PC-3 (cell line): ENCODE measurements at regions of chr16 and their contacts with region 1.

Region 1: DNA sequence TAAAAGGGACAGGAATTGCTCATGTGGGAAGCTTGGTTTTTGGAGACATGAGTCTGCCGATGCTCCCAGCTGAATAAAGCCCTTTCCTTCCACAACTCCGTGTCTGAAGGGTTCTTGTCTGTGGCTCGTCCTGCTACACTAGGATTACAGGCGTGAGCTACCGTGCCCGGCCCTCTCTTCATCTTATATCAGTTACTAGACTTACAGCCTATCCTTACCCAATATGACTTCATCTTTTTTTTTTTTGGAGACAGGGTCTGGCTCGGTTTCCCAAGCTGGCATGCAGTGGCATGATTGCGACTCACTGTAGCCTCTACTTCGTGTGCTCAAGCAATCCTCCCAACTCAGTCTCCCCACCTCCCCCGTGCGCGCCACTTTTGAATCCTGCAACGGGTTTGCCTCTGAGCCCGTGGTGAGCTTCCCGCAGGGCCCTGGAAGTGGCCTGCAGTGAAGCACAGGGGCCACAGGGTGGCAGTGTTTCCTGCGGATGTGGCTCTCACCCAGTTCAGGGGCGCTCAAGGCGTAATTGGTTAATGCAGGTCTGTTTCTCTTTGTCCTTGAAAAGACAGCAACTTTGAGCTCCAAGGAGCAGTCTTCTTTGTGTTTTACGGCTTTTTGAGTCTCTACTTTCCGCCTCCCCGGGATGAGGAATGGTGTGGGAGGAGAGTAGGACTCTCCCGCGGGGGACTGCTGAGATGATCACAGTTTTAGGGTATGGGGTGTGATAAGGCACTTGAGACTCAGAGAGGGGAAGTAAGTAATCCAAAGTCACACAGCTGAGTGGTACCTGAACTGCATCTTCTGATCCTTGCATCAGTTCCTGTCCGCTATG is 22.7 kb upstream of the GPRC5B start:
- DNase-seq: peak; percentile 80
- ATAC-seq: peak; percentile 93
- H3K4me3 ChIP-seq: no peak overlapping the region; the same call in 1 of the 2 replicates
- H3K27ac ChIP-seq: no peak overlapping the region
- H3K4me1 ChIP-seq: no peaks in the 10 kb centered on the region
- H3K27me3 ChIP-seq: no peaks in the 10 kb centered on the region
- CTCF ChIP-seq: peak; percentile 89

Region 2: DNA sequence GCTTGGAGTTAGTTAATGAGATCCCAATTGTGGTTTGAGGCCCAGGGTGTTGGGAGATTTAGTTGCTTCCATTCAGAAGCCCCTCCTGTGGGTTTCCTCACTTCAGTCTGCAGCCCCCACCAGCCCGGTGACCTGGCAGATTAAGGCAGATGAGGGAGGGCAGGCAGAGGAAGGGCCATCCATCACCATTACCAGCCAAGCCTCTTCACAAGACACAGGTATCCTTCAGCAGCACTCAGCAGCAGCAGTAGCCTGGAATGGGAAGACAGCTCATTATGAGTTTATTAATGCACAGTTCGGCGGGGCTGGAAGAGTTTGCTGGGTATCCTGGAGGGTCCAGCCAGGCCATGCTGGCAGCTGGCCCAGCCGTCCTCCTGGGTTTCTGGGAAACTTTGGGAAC is 67.2 kb after region 1 on chr16:
- CTCF ChIA-PET with region 1: no interaction called
- POLR2A ChIA-PET with region 1: no interaction called
- intact Hi-C with region 1: loop called (anchors 10 kb)
- DNase-seq: no peak
- ATAC-seq: no peak
- H3K4me3 ChIP-seq: no peak overlapping the region
- H3K27ac ChIP-seq: no peak overlapping the region
- H3K4me1 ChIP-seq: no peaks in the 10 kb centered on the region
- H3K27me3 ChIP-seq: no peaks in the 10 kb centered on the region
- CTCF ChIP-seq: no peak

Region 3: GRCh38 chr16:20300312-20301097 is 393.1 kb after region 1 on chr16:
- CTCF ChIA-PET with region 1: interaction called, 37 read pairs
- POLR2A ChIA-PET with region 1: no interaction called
- intact Hi-C with region 1: loop called (anchors 1 kb)
- DNase-seq: peak; percentile 59
- ATAC-seq: peak; percentile 85
- H3K4me3 ChIP-seq: no peak overlapping the region
- H3K27ac ChIP-seq: no peak overlapping the region
- H3K4me1 ChIP-seq: no peaks in the 10 kb centered on the region
- H3K27me3 ChIP-seq: no peaks in the 10 kb centered on the region
- CTCF ChIP-seq: peak; percentile 81

Region 4: GRCh38 chr16:20383106-20384029 is 476.0 kb after region 1 on chr16:
- CTCF ChIA-PET with region 1: interaction called, 12 read pairs
- POLR2A ChIA-PET with region 1: no interaction called
- intact Hi-C with region 1: loop called (anchors 2 kb)
- DNase-seq: peak; percentile 74
- ATAC-seq: peak; percentile 74
- H3K4me3 ChIP-seq: no peak overlapping the region
- H3K27ac ChIP-seq: no peak overlapping the region
- H3K4me1 ChIP-seq: no peaks in the 10 kb centered on the region
- H3K27me3 ChIP-seq: no peaks in the 10 kb centered on the region
- CTCF ChIP-seq: peak; percentile 69